ENCODE measurements at regions of chr13 and their contacts with region 1.

Region 1: DNA sequence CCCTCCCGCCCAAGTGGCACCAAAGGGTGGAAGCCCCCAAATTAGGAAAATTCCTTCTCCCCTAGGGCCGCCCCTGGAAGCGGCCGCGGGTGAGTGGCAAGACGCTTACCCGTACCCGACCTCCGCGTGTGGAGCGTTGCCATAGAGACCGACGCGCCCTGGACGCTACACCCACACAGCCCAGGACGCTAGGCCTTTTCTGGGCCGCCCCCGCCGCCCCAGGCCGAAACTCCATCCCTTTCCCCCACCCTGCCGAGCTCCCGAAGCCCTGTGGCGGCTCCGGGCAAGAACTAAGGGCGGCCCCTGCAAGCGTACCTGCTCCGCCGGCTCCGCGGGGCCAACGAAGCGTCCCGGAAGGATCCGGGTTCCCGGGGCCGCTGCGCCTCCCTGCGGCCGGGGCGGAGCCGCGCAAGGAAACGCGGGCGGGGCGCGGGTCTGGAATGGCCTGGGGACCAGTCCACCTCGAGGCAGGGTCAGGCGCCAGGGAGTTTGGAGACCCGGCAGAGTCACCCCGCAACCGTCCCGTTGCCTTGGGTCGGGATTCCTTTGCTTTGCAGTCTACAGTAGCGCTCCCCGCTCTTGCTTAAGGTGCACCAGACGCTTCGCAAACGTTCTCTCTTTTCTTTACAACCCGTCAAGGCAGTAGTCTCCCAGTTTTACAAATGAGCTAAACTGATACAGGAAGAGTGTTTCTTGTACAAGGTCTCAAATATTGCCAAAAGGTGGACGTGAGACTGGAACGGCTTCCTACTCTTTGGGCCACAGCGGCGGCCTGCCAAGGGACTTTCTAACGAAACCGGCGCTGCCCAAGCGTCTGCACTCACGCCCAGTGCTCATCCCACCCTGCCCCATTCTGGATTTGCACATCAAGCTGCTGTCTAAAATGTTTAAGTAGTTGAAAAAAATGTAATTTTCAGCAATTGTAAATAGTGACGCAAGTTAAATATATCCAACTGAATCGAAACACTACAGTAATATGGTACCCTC is at the start of gene NEK5:
- DNase-seq: peak; percentile 90
- H3K4me3 ChIP-seq: peak within 1 kb of the TSS; percentile 71
- H3K27ac ChIP-seq: no peak within 1 kb of the TSS
- H3K4me1 ChIP-seq: peaks cover 0 to 11% of the 10 kb centered on the region in 2 experiments; a peak in 1 of 4 replicates
- H3K27me3 ChIP-seq: no peaks in the 10 kb centered on the region
- CTCF ChIP-seq: peak; percentile 68
- EP300 ChIP-seq: no peak
- RAD21 ChIP-seq: peak; percentile 51
- polyA plus RNA-seq, gene NEK5: 0.07 and 0.13 TPM in 2 replicates

Region 2: DNA sequence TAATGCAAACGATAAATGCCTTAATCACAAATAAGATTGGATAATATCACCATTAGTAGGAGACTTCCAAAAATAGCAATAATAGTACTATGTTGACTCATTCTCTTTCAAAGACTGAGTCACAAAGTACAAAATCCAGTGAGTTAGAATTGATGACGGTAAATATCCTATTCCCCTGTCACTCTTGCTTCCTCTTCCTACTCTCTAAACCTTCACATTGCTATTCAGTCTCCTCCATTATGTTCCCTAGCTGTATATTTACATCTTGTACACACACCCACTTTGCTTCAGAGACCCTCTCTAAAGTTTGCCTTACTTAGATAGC is 649.8 kb before region 1 on chr13:
- CTCF ChIA-PET with region 1: no interaction called
- POLR2A ChIA-PET with region 1: no interaction called
- DNase-seq: no peak
- H3K4me3 ChIP-seq: no peak overlapping the region
- H3K27ac ChIP-seq: peak overlapping the region in 1 of 2 experiments; percentile 53; a peak in 2 of 4 replicates
- H3K4me1 ChIP-seq: peaks cover 0 to 9% of the 10 kb centered on the region in 2 experiments; a peak in 1 of 4 replicates
- H3K27me3 ChIP-seq: no peaks in the 10 kb centered on the region
- CTCF ChIP-seq: no peak
- EP300 ChIP-seq: peak in 1 of 2 experiments; percentile 55; a peak in 1 of 4 replicates
- RAD21 ChIP-seq: no peak

Region 3: DNA sequence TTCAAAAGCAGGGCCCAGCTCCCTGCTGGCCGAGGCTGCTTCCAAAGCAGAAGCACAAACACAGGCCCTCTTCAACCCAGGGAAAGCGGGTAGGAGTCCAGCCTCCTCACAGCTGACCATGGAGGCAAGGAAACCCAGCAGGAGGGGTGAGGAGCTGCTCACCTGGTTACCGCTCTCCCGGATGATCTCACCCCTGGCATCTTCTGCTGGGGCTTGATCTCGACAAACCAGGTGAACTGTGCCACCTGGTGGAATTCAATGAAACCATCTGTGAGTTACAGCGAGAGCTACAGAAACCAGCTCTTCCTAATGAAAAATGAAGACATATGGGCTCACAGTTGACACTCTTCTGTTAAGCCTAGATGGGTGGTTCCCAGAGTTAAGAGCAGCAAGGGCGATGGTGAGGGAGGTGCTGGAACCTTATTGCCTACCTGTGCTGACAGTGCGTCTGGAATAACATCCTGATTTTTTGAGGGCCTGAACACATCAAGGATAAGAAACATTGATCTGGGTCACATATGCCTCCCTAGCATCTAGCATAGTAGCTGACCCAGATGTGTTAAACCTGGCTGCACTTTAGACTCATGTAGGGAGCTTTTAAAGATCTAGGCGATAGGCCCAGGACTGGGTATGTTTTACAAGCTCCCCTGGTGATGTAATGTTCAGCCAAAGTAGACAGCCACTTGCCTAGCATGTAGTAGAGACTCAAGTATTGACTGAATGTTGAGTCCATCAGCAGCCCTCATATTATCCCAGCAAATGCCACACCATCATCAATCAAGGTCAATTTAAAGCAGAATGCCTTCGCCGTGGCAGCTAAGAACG is 331.1 kb before region 1 on chr13:
- CTCF ChIA-PET with region 1: interaction called, 10 read pairs
- POLR2A ChIA-PET with region 1: interaction called, 5 read pairs
- DNase-seq: peak; percentile 76
- H3K4me3 ChIP-seq: no peak overlapping the region
- H3K27ac ChIP-seq: peak overlapping the region in 1 of 2 experiments; percentile 50; a peak in 1 of 4 replicates
- H3K4me1 ChIP-seq: peaks cover 19 to 44% of the 10 kb centered on the region in 2 experiments
- H3K27me3 ChIP-seq: no peaks in the 10 kb centered on the region
- CTCF ChIP-seq: peak; percentile 59
- EP300 ChIP-seq: no peak
- RAD21 ChIP-seq: peak; percentile 93

Region 4: GRCh38 chr13:51895906-51896888 is 232.8 kb before region 1 on chr13:
- CTCF ChIA-PET with region 1: interaction called, 52 read pairs
- POLR2A ChIA-PET with region 1: no interaction called
- DNase-seq: peak; percentile 62
- H3K4me3 ChIP-seq: no peak overlapping the region; a peak in 1 of 4 replicates
- H3K27ac ChIP-seq: no peak overlapping the region
- H3K4me1 ChIP-seq: peaks cover 0 to 18% of the 10 kb centered on the region in 2 experiments; a peak in 1 of 4 replicates
- H3K27me3 ChIP-seq: no peaks in the 10 kb centered on the region
- CTCF ChIP-seq: peak; percentile 79
- EP300 ChIP-seq: no peak
- RAD21 ChIP-seq: peak; percentile 74

Region 5: DNA sequence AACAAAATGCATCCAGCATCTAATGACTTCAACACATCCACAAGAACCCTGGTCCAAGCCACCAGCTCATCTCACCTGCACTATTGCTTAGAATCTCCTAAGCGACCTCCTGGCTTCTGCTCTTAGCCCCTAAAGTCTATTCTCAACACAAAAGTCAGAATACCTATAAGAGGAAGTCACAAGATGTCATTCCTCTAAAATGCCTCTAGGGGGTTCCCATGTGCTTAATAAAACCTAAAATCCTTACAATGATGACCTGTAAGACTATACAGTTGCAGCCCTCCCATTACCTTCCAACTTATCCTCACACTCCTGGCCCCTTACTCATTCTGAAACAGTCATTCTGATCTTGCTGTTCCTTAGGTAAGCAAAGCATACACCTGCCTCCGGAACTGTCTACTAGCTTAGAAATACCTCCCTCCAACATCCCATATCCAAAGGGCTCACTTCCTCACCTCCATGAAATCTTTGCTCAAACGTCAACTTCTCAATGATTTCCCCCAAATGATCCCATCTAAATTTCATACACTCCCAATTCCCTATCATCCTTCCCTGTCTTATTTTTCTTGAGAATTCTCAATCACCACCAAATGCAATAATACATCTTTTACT is 127.8 kb before region 1 on chr13:
- CTCF ChIA-PET with region 1: interaction called, 35 read pairs
- POLR2A ChIA-PET with region 1: no interaction called
- DNase-seq: peak; percentile 64
- H3K4me3 ChIP-seq: no peak overlapping the region; a peak in 1 of 4 replicates
- H3K27ac ChIP-seq: no peak overlapping the region
- H3K4me1 ChIP-seq: no peaks in the 10 kb centered on the region; a peak in 1 of 4 replicates
- H3K27me3 ChIP-seq: no peaks in the 10 kb centered on the region
- CTCF ChIP-seq: peak; percentile 72
- EP300 ChIP-seq: no peak
- RAD21 ChIP-seq: peak; percentile 75

Region 6: DNA sequence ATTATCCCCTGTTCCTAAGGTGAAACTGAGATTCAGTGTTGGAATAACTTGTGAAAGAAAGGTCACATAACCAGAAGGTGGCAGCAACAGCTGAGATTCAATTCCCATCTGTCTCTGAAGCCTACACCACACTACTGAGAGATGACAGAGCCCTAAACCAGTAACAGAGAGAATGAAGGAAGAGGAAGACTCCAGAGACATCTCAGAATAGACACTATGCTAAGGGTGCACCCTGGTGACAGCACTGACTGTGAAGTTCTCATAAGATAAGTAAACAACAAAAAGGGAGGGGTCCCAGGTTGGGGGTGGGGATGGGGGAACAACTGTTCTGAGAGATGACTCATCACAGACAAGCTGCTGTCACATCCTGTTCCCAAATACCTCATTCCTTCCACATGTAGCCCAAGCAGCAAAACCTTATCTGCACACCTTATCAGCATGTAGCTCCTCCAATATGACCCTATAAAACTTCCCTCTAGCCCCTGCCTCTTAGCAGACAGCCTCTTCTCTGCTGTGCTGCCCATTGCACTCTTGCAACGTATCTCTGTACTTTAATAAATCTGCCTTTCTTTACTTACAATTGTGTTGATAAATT is 58.0 kb before region 1 on chr13:
- CTCF ChIA-PET with region 1: interaction called, 11 read pairs
- POLR2A ChIA-PET with region 1: no interaction called
- DNase-seq: peak; percentile 36
- H3K4me3 ChIP-seq: no peak overlapping the region
- H3K27ac ChIP-seq: no peak overlapping the region
- H3K4me1 ChIP-seq: no peaks in the 10 kb centered on the region
- H3K27me3 ChIP-seq: no peaks in the 10 kb centered on the region
- CTCF ChIP-seq: peak; percentile 36
- EP300 ChIP-seq: no peak
- RAD21 ChIP-seq: peak; percentile 50

Region 7: GRCh38 chr13:52112591-52112990 is 16.4 kb before region 1 on chr13:
- CTCF ChIA-PET with region 1: interaction called, 36 read pairs
- POLR2A ChIA-PET with region 1: no interaction called
- DNase-seq: no peak
- H3K4me3 ChIP-seq: no peak overlapping the region
- H3K27ac ChIP-seq: no peak overlapping the region
- H3K4me1 ChIP-seq: no peaks in the 10 kb centered on the region
- H3K27me3 ChIP-seq: no peaks in the 10 kb centered on the region; the same call in 1 of the 2 replicates
- CTCF ChIP-seq: no peak
- EP300 ChIP-seq: no peak
- RAD21 ChIP-seq: no peak

Region 8: DNA sequence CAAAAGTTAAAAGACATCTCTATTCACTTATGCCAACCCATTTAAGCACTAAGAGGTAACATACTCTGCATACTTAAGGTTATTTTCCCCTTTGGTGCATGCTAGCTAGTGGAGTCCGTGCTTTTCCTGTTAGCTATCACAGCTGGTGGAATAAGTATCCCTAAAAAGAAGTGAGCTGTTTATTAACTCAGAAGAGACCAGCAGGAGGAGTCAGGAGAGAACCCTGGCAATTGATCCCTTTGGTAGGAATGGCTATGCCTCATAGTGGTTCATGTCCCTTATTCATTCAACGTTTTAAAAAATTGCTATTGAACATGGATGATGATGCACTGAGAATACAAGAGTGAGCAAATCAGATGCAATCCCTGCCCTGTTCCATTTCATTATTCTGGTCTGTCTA is 12.3 kb after region 1 on chr13:
- CTCF ChIA-PET with region 1: interaction called, 21 read pairs
- POLR2A ChIA-PET with region 1: no interaction called
- DNase-seq: no peak
- H3K4me3 ChIP-seq: no peak overlapping the region
- H3K27ac ChIP-seq: no peak overlapping the region
- H3K4me1 ChIP-seq: no peaks in the 10 kb centered on the region
- H3K27me3 ChIP-seq: no peaks in the 10 kb centered on the region
- CTCF ChIP-seq: no peak
- EP300 ChIP-seq: no peak
- RAD21 ChIP-seq: no peak

Region 9: GRCh38 chr13:52319876-52320275 is 190.9 kb after region 1 on chr13:
- CTCF ChIA-PET with region 1: no interaction called
- POLR2A ChIA-PET with region 1: no interaction called
- DNase-seq: no peak
- H3K4me3 ChIP-seq: no peak overlapping the region
- H3K27ac ChIP-seq: no peak overlapping the region
- H3K4me1 ChIP-seq: no peaks in the 10 kb centered on the region
- H3K27me3 ChIP-seq: peaks cover 17% of the 10 kb centered on the region; the same call in 1 of the 2 replicates
- CTCF ChIP-seq: no peak
- EP300 ChIP-seq: no peak
- RAD21 ChIP-seq: no peak